B cell (primary cell): ENCODE measurements at regions of chr15 and their contacts with region 1.

Region 1: DNA sequence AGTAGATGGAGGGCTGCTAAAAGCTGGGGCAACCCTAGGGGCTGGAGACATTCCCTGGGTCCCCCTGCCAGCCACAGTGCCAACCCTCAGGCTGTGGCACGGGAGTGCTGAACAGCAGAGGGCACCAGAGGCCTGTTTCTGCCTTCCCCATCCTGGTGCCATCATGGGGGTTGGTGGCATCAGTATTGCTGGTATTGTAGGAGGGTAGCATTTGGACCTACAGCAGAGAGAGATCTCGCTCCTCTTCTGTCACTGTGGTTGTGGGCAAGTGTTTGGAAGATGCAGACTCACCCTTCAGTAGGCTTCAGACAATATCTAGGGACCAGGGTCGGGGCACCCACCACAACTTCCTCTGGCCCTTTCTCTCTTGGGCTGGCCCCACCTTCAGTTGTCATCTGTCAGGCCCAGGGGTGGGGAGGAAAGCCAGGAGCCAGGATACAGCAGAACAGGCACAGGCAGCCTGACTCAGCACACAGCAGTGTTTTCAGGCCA is 123.5 kb downstream of the RPLP1 start:
- DNase-seq: peak; percentile 74
- ATAC-seq: peak; percentile 83
- H3K4me3 ChIP-seq: no peak overlapping the region
- H3K4me3 Mint-ChIP-seq: no peak overlapping the region
- H3K27ac ChIP-seq: no peak overlapping the region
- H3K27ac Mint-ChIP-seq: no peak overlapping the region
- H3K4me1 ChIP-seq: peaks cover 5 to 8% of the 10 kb centered on the region in 2 donors
- H3K4me1 Mint-ChIP-seq: peaks cover 11% of the 10 kb centered on the region
- H3K27me3 ChIP-seq: peaks cover 0 to 10% (median under 1%) of the 10 kb centered on the region in 4 experiments
- H3K27me3 Mint-ChIP-seq: peaks cover 18% of the 10 kb centered on the region
- CTCF ChIP-seq: peak; percentile 82

Region 2: DNA sequence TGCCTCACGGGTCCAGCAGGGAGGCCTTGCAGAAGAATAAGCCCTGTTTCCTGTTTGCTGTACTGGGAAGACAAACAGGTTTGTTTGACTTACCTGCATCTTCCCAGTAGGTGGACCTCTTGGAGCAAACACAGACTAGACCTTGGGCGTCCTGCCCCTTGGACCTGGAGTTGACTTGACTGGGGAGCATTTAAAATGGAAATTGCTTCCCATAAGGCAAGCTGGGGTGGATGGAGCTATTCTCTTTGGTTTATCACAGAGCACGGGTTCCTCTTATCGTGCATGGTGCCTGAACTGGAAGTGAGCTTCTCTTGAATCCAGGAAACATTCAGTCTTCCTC is 28.0 kb after region 1 on chr15:
- CTCF ChIA-PET with region 1: no interaction called
- POLR2A ChIA-PET with region 1: no interaction called
- intact Hi-C with region 1: no loop called
- DNase-seq: no peak
- ATAC-seq: no peak
- H3K4me3 ChIP-seq: no peak overlapping the region
- H3K4me3 Mint-ChIP-seq: no peak overlapping the region
- H3K27ac ChIP-seq: no peak overlapping the region
- H3K27ac Mint-ChIP-seq: no peak overlapping the region
- H3K4me1 ChIP-seq: no peaks in the 10 kb centered on the region
- H3K4me1 Mint-ChIP-seq: peaks cover 1% of the 10 kb centered on the region
- H3K27me3 ChIP-seq: peaks cover 0 to 8% (median 0%) of the 10 kb centered on the region in 4 experiments
- H3K27me3 Mint-ChIP-seq: peaks cover 34% of the 10 kb centered on the region
- CTCF ChIP-seq: no peak

Region 3: DNA sequence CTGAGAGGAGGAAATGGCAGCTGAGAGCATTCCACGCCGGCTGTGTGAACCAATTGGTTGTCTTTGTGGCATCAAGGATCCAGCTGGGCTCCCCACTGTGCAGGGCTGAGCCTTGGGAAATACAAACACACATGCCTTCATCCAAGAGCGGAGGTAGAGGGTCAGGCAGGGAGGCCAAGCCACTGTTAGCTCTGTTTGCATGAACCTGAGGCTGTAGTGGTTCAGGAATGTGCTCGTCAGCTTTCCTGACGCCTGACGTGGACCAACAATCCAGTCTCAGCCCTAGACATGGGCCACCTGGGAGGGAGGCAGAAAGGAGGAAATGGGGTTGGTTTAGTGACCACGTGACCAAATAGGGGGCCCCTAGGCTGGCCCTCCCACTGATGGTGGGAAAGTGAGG is 244.7 kb after region 1 on chr15:
- CTCF ChIA-PET with region 1: no interaction called
- POLR2A ChIA-PET with region 1: no interaction called
- intact Hi-C with region 1: no loop called
- DNase-seq: no peak
- ATAC-seq: no peak
- H3K4me3 ChIP-seq: no peak overlapping the region
- H3K4me3 Mint-ChIP-seq: no peak overlapping the region
- H3K27ac ChIP-seq: no peak overlapping the region
- H3K27ac Mint-ChIP-seq: no peak overlapping the region
- H3K4me1 ChIP-seq: no peaks in the 10 kb centered on the region
- H3K4me1 Mint-ChIP-seq: no peaks in the 10 kb centered on the region
- H3K27me3 ChIP-seq: peaks cover 0 to 20% (median 0%) of the 10 kb centered on the region in 4 experiments
- H3K27me3 Mint-ChIP-seq: peaks cover 28% of the 10 kb centered on the region
- CTCF ChIP-seq: no peak

Region 4: DNA sequence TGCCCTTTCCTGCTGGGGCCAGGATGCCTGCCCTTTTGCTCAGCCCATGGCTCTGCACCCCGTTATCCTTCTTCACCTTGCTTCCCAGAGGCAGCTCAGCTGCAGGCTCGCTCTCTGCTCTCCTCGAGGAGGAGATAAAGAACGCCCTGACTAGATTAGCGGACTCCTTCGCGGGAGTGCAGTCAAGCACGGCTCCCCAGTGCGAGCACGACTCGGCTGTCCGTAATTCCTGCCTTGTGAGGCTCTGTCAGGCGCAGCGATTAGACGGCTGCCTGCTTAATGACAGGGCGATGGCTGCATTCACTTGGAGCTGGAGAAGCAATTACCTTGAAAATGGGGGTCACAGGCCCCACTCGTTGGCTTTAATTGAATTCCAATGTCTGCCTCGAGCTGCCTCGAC is 495.7 kb after region 1 on chr15:
- CTCF ChIA-PET with region 1: interaction called, 13 read pairs
- POLR2A ChIA-PET with region 1: no interaction called
- intact Hi-C with region 1: loop called (anchors 1 kb)
- DNase-seq: peak; percentile 39
- ATAC-seq: no peak
- H3K4me3 ChIP-seq: no peak overlapping the region
- H3K4me3 Mint-ChIP-seq: peak overlapping the region; percentile 16
- H3K27ac ChIP-seq: peak overlapping the region in 1 of 2 donors; percentile 31
- H3K27ac Mint-ChIP-seq: peak overlapping the region; percentile 71
- H3K4me1 ChIP-seq: peaks cover 15 to 30% of the 10 kb centered on the region in 2 donors
- H3K4me1 Mint-ChIP-seq: peaks cover 55% of the 10 kb centered on the region
- H3K27me3 ChIP-seq: no peaks in the 10 kb centered on the region
- H3K27me3 Mint-ChIP-seq: no peaks in the 10 kb centered on the region
- CTCF ChIP-seq: no peak

Region 5: GRCh38 chr15:70459312-70459875 is 883.3 kb after region 1 on chr15:
- CTCF ChIA-PET with region 1: interaction called, 13 read pairs
- POLR2A ChIA-PET with region 1: no interaction called
- intact Hi-C with region 1: loop called (anchors 1 kb)
- DNase-seq: no peak
- ATAC-seq: no peak
- H3K4me3 ChIP-seq: no peak overlapping the region
- H3K4me3 Mint-ChIP-seq: no peak overlapping the region
- H3K27ac ChIP-seq: no peak overlapping the region
- H3K27ac Mint-ChIP-seq: peak overlapping the region; percentile 17
- H3K4me1 ChIP-seq: peaks cover 12 to 23% of the 10 kb centered on the region in 2 donors
- H3K4me1 Mint-ChIP-seq: peaks cover 26% of the 10 kb centered on the region
- H3K27me3 ChIP-seq: no peaks in the 10 kb centered on the region
- H3K27me3 Mint-ChIP-seq: peaks cover 3% of the 10 kb centered on the region
- CTCF ChIP-seq: no peak

Region 6: DNA sequence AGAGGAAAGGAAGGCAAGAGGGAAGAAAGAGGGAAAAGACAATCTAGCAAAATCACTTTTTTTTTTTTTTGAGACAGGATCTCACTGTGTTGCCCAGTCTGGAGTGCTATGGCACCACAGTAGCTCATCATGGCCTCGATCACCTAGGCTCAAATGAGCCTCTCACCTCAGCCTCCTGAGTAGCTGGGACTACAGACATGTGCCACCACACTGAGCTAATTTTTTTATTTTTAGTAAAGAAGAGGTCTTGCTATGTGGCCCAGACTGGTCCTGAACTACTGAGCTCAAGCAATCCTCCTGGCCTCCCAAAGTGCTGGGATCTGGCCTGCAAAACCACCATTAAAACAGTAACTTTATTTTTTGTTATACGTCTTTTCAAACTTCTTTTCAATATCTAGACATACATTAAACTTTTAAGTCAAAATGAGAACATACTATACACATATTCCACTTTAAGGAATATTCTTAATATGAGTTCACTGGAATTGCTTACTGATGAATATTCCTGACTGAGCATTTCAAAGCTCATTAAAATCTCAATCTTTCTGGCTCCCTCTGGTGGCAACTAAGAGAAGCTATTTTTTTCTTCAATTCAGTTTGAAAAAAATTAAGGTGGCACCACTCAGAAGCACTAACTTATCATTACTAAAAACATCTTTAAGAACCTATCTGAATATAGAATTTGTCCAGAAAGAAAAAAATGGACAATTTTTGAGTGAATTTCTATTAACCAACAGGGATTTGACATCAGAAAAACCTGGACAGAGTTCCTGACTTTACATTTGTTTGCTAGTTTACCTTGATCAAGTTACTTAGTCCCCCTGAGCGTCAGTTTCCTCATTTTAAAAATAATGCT is 1146.4 kb after region 1 on chr15:
- CTCF ChIA-PET with region 1: interaction called, 12 read pairs
- POLR2A ChIA-PET with region 1: no interaction called
- intact Hi-C with region 1: loop called (anchors 10 kb)
- DNase-seq: peak; percentile 57
- ATAC-seq: peak; percentile 39
- H3K4me3 ChIP-seq: no peak overlapping the region
- H3K4me3 Mint-ChIP-seq: no peak overlapping the region
- H3K27ac ChIP-seq: no peak overlapping the region
- H3K27ac Mint-ChIP-seq: no peak overlapping the region
- H3K4me1 ChIP-seq: no peaks in the 10 kb centered on the region
- H3K4me1 Mint-ChIP-seq: no peaks in the 10 kb centered on the region
- H3K27me3 ChIP-seq: peaks cover 0 to 11% (median 2%) of the 10 kb centered on the region in 4 experiments
- H3K27me3 Mint-ChIP-seq: peaks cover 7% of the 10 kb centered on the region
- CTCF ChIP-seq: peak; percentile 94